ENCODE measurements at regions of chr18 and their contacts with region 1.

Region 1: GRCh38 chr18:12766986-12767433 is 64.2 kb downstream of the PSMG2 start:
- DNase-seq: peak; percentile 73 to 81
- H3K4me3 ChIP-seq: no peak overlapping the region
- H3K27ac ChIP-seq: no peak overlapping the region
- H3K4me1 ChIP-seq: peaks cover 0 to 6% (median 4%) of the 10 kb centered on the region in 4 experiments; a peak in 4 of 7 replicates
- H3K27me3 ChIP-seq: no peaks in the 10 kb centered on the region
- CTCF ChIP-seq: peak; percentile 70 to 85 (median 83)
- EP300 ChIP-seq: no peak
- POLR2A ChIP-seq: no peak
- RAD21 ChIP-seq: peak; percentile 79

Region 2: DNA sequence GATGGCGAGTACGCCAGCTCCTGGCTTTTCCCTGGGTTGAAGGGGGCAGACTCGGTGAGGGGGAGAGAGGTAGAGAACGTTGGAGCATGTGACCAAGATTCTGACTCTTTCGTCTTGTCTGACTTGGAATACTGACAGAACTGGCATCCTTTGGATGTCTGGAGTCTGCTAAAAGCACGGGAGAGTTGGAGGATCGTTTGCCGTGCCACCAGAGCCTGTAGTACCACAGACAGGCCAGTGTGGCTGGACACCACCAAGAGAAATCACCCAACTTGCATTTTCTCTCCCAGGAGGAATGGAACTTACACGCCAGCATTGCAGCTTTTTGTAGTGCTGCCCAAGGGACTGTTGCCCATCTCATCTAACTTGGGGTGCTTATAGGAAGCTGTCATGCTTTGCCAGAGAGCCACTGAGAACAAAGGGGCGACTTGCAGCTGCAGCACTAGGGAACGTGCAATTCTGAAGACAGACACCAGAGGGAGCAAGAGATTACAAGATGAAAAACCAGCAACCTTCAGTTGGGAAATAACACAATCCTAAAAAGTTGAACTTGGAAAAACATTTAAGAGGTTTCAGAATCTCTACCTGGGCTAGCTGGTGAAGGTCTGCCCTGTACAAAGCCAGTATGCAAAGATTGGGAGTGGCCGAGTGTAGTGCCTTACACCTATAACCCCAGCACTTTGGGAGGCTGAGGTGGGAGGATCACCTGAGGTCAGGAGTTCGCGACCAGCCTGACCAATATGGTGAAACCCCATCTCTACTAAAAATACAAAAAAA is 40.0 kb before region 1 on chr18:
- CTCF ChIA-PET with region 1: interaction called, 20 read pairs
- POLR2A ChIA-PET with region 1: no interaction called
- DNase-seq: peak; percentile 44 to 85
- H3K4me3 ChIP-seq: 0 out of 8 replicates have a peak overlapping the region, but pooled peaks of 1 of the 4 experiments have one; percentile 0
- H3K27ac ChIP-seq: no peak overlapping the region
- H3K4me1 ChIP-seq: no peaks in the 10 kb centered on the region
- H3K27me3 ChIP-seq: no peaks in the 10 kb centered on the region
- CTCF ChIP-seq: peak; percentile 55 to 84 (median 80)
- EP300 ChIP-seq: no peak
- POLR2A ChIP-seq: no peak
- RAD21 ChIP-seq: peak; percentile 91 to 93

Region 3: GRCh38 chr18:12777500-12777944 is 10.5 kb after region 1 on chr18:
- CTCF ChIA-PET with region 1: interaction called, 18 read pairs
- POLR2A ChIA-PET with region 1: interaction called, 14 read pairs
- DNase-seq: no peak
- H3K4me3 ChIP-seq: peak overlapping the region; percentile 31 to 63 (median 44)
- H3K27ac ChIP-seq: no peak overlapping the region
- H3K4me1 ChIP-seq: no peaks in the 10 kb centered on the region
- H3K27me3 ChIP-seq: peaks cover 0 to 28% (median 15%) of the 10 kb centered on the region in 4 experiments; a peak in 5 of 7 replicates
- CTCF ChIP-seq: no peak
- EP300 ChIP-seq: no peak
- POLR2A ChIP-seq: no peak
- RAD21 ChIP-seq: no peak